GM12878 (cell line): ENCODE measurements at regions of chr12 and their contacts with region 1.

Region 1: GRCh38 chr12:41486718-41487117 is 298.6 kb downstream of the PDZRN4 start:
- DNase-seq: no peak
- ATAC-seq: no peak
- H3K4me3 ChIP-seq: no peak overlapping the region
- H3K27ac ChIP-seq: no peak overlapping the region
- H3K4me1 ChIP-seq: no peaks in the 10 kb centered on the region
- H3K27me3 ChIP-seq: no peaks in the 10 kb centered on the region
- CTCF ChIP-seq: no peak
- EP300 ChIP-seq: no peak
- POLR2A ChIP-seq: no peak
- RAD21 ChIP-seq: no peak

Region 2: DNA sequence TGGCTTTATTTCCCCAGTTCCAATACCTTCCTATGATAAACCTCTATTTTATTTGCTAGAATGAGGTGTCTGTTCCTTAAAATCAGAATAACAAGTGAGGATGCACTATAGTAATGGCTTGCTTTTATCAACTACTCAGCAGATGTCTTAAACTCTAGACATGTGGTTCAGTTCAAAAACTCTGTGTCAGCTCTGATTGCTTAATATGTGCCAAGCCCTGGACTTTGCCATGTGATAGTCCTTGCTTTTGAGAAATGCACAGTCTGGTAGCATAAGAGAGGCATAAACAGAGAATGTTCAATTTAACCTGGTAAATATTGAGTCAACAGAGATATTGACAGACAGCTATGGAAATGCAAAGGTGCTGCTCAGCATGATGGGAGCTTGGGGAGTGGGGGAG is 43.8 kb before region 1 on chr12:
- CTCF ChIA-PET with region 1: no interaction called
- POLR2A ChIA-PET with region 1: no interaction called
- RAD21 ChIA-PET with region 1: no interaction called
- SMC1A ChIA-PET with region 1: no interaction called
- in situ Hi-C with region 1: no loop called
- intact Hi-C with region 1: loop called (anchors 5 kb)
- DNase-seq: no peak
- ATAC-seq: no peak
- H3K4me3 ChIP-seq: no peak overlapping the region
- H3K27ac ChIP-seq: no peak overlapping the region
- H3K4me1 ChIP-seq: no peaks in the 10 kb centered on the region
- H3K27me3 ChIP-seq: no peaks in the 10 kb centered on the region
- CTCF ChIP-seq: no peak
- EP300 ChIP-seq: no peak
- POLR2A ChIP-seq: no peak
- RAD21 ChIP-seq: no peak